ENCODE measurements at regions of chr10 and their contacts with region 1.

Region 1: GRCh38 chr10:76984559-76985443 is 652.8 kb downstream of the KCNMA1 start:
- DNase-seq: peak; percentile 85
- H3K4me3 ChIP-seq: no peak overlapping the region
- H3K27ac ChIP-seq: no peak overlapping the region
- H3K4me1 ChIP-seq: no peaks in the 10 kb centered on the region
- H3K27me3 ChIP-seq: no peaks in the 10 kb centered on the region

Region 2: DNA sequence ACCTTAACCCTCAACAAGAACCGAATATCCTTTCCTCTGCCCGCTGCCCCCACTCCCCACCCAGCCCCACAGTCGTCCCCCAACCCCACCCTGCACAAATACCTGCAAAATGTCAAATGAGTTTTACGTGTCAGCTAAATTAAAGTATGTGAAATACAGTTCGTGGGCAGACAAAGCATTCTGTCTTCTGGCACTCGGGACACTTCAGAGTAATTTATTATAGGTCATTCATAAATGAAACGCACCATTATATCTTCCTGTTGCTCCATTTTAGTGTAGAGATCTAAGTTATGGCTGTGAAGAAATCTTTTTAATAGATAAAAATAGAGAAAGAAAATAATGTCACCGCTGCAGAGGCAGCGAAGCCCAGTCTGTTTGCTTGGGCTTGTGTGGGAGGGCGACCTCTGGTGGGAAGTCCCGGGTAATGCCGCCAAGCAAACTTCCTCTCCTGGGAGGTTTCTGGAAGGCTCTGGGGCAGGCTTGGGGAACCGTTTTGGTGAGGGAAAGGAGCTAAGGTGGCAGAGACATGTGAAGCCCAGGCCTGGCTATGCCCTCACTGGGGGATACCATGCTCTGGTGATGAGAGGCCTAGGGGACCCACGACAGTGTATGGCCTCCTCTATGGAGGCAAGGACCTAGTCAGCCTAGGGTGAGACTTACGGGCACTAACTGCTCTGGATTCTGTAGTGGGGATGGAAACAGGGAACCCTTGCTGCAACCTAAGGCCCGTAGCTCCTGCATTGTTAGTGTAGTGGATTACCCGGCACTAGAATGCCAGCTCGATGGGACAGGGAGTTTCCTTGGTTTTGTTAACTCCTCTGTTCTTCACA is 948.5 kb before region 1 on chr10:
- in situ Hi-C with region 1: loop called (anchors 25 kb)
- DNase-seq: peak; percentile 77
- H3K4me3 ChIP-seq: no peak overlapping the region
- H3K27ac ChIP-seq: no peak overlapping the region
- H3K4me1 ChIP-seq: peaks cover 23% of the 10 kb centered on the region
- H3K27me3 ChIP-seq: no peaks in the 10 kb centered on the region

Region 3: GRCh38 chr10:76303682-76304316 is 681.0 kb before region 1 on chr10:
- in situ Hi-C with region 1: loop called (anchors 25 kb)
- DNase-seq: peak; percentile 89
- H3K4me3 ChIP-seq: no peak overlapping the region
- H3K27ac ChIP-seq: no peak overlapping the region
- H3K4me1 ChIP-seq: peaks cover 24% of the 10 kb centered on the region
- H3K27me3 ChIP-seq: no peaks in the 10 kb centered on the region

Region 4: GRCh38 chr10:76558586-76558985 is 426.2 kb before region 1 on chr10:
- in situ Hi-C with region 1: loop called (anchors 10 kb)
- DNase-seq: peak; percentile 75
- H3K4me3 ChIP-seq: no peak overlapping the region
- H3K27ac ChIP-seq: no peak overlapping the region
- H3K4me1 ChIP-seq: peaks cover 23% of the 10 kb centered on the region
- H3K27me3 ChIP-seq: peaks cover 10% of the 10 kb centered on the region; the same call in 1 of the 2 replicates

Measured in GM23248 (cell line).